Mammary epithelial cell (primary cell): ENCODE measurements at regions of chr14 and their contacts with region 1.

Region 1: GRCh38 chr14:68979021-68979782 is at the start of gene ACTN1:
- DNase-seq: peak; percentile 98
- H3K4me3 ChIP-seq: peak within 1 kb of the TSS; percentile 86 to 96 (median 96)
- H3K27ac ChIP-seq: peak within 1 kb of the TSS; percentile 85
- H3K4me1 ChIP-seq: peaks cover 45% of the 10 kb centered on the region
- H3K27me3 ChIP-seq: no peaks in the 10 kb centered on the region
- CTCF ChIP-seq: no peak
- total RNA-seq, gene ACTN1: 841 to 1,322 TPM

Region 2: GRCh38 chr14:68899033-68899603 is 80.1 kb before region 1 on chr14:
- CTCF ChIA-PET with region 1: no interaction called
- dilution Hi-C with region 1: no loop called
- in situ Hi-C with region 1: no loop called
- intact Hi-C with region 1: no loop called
- DNase-seq: no peak
- H3K4me3 ChIP-seq: no peak overlapping the region
- H3K27ac ChIP-seq: no peak overlapping the region
- H3K4me1 ChIP-seq: peaks cover 34% of the 10 kb centered on the region
- H3K27me3 ChIP-seq: no peaks in the 10 kb centered on the region
- CTCF ChIP-seq: no peak

Region 3: DNA sequence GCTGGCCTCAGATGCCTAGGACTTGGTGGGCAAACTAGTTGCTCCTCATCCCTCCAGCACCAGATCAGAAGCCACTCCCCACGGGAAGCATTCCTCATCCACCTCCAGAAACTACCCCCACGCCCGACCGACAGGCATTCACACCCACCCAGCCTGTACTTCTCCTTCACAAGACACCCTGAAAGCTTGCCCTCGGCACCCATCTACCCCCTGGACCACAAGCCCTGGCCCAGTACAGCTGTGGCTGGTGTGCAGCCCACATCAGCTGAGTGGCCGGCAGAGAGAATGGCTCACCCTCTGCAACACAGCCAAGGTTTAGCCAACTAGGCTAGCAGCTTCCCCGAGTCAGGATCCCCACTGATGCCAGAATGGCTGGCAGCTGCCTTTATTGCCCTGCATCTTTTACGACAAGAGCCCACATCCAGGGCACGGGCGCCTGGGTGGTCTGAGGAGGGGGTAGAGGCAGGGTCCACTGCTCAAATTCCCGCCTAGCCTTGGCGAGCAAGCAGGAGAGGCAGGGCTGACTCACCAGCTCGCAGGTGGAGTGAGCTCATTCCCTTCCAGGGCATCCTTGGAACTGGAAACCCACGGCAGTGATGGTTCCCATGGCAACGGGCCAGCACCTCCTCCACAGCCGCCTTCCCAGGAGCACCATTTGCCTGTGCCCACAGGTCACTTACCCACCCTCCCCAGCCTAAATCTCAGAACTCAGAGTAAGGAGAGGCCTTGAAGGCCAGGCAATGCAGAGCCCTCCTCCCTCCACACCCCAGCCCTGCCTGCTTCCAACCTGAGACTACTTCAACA is 17.2 kb before region 1 on chr14:
- CTCF ChIA-PET with region 1: no interaction called
- dilution Hi-C with region 1: no loop called
- in situ Hi-C with region 1: no loop called
- intact Hi-C with region 1: loop called (anchors 1 kb)
- DNase-seq: peak; percentile 92
- H3K4me3 ChIP-seq: no peak overlapping the region
- H3K27ac ChIP-seq: peak overlapping the region; percentile 43
- H3K4me1 ChIP-seq: peaks cover 99% of the 10 kb centered on the region
- H3K27me3 ChIP-seq: no peaks in the 10 kb centered on the region
- CTCF ChIP-seq: no peak

Region 4: GRCh38 chr14:69043596-69044260 is 64.5 kb after region 1 on chr14:
- CTCF ChIA-PET with region 1: no interaction called
- dilution Hi-C with region 1: loop called (anchors 10 kb)
- in situ Hi-C with region 1: no loop called
- intact Hi-C with region 1: no loop called
- DNase-seq: no peak
- H3K4me3 ChIP-seq: no peak overlapping the region
- H3K27ac ChIP-seq: no peak overlapping the region
- H3K4me1 ChIP-seq: peaks cover 26% of the 10 kb centered on the region
- H3K27me3 ChIP-seq: no peaks in the 10 kb centered on the region
- CTCF ChIP-seq: no peak

Region 5: DNA sequence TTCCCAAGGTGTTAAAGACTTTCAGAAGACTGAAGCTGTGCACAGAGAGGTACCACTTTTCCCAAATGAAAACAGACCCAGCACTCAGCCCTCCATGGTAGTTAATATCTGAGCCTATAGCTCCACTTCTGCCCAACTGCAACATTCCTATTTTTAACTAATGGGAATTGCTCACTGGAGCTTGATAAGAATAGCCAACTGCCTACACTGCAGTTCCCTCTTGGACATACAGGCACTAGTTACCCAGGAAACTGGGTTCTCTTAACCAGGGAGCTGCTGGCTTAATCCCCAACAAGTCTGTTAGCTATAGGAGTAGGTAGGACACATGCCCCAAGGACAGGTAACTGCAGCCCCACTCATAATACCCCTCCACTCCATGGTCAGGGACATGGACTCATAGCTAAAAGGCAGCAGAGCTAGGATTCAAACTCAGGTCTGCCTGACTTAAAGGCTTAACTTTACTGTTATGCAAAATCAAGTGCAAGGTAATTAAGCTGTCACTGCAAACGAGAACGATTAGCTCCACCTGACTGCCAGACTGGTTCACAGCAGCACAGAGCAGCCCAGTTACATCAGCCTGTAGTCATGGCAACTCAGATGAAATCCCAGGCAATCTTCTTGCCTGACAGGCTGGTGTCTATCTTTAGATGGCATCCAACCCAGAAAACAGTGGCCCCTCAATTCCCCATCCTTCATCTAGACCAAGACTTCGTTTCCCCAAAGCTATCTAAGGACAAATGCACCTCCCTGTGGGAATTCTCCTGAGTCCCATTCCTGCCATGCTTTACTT is 77.0 kb after region 1 on chr14:
- CTCF ChIA-PET with region 1: no interaction called
- dilution Hi-C with region 1: no loop called
- in situ Hi-C with region 1: no loop called
- intact Hi-C with region 1: loop called (anchors 1 kb)
- DNase-seq: peak; percentile 40
- H3K4me3 ChIP-seq: no peak overlapping the region
- H3K27ac ChIP-seq: no peak overlapping the region
- H3K4me1 ChIP-seq: no peaks in the 10 kb centered on the region
- H3K27me3 ChIP-seq: no peaks in the 10 kb centered on the region
- CTCF ChIP-seq: peak in 1 of 2 donors; percentile 57

Region 6: GRCh38 chr14:69101331-69101826 is 122.2 kb after region 1 on chr14:
- CTCF ChIA-PET with region 1: no interaction called
- dilution Hi-C with region 1: no loop called
- in situ Hi-C with region 1: no loop called
- intact Hi-C with region 1: loop called (anchors 1 kb)
- DNase-seq: peak; percentile 75
- H3K4me3 ChIP-seq: no peak overlapping the region
- H3K27ac ChIP-seq: peak overlapping the region; percentile 65
- H3K4me1 ChIP-seq: peaks cover 18% of the 10 kb centered on the region
- H3K27me3 ChIP-seq: no peaks in the 10 kb centered on the region
- CTCF ChIP-seq: peak; percentile 59 to 76